AG04450 (cell line): ENCODE measurements at regions of chrX and their contacts with region 1.

Region 1: DNA sequence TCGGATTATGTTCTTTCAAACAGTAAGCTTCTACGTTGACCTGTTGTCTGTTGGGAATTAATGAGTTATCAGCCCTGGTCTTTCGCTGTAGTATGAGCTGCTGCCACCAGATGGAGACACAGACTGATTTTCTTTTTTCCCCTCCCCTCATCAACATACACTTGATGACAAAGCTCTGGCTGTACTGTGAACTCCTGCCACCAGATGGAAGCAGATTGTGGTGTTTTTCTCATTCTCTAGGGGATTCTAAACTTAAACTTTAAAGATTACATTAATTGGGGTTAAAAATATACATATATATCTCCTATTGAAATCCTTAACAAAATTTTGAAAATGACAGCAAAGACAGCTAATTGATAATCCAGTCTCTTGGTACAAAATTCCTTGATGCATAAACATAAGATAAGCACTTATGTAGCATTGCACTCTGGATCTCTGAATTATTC is 44.8 kb downstream of the SMS start:
- DNase-seq: peak; percentile 51
- H3K4me3 ChIP-seq: no peak overlapping the region
- H3K27ac ChIP-seq: no peak overlapping the region
- H3K27me3 ChIP-seq: no peaks in the 10 kb centered on the region
- CTCF ChIP-seq: peak; percentile 82

Region 2: GRCh38 chrX:21839334-21840192 is 145.8 kb before region 1 on chrX and contains the start of gene MBTPS2:
- CTCF ChIA-PET with region 1: interaction called, 11 read pairs
- POLR2A ChIA-PET with region 1: no interaction called
- DNase-seq: peak; percentile 81
- H3K4me3 ChIP-seq: peak within 1 kb of the TSS; percentile 74
- H3K27ac ChIP-seq: peak within 1 kb of the TSS; percentile 61
- H3K27me3 ChIP-seq: no peaks in the 10 kb centered on the region
- CTCF ChIP-seq: peak; percentile 15; the same call in 1 of the 2 replicates
- polyA plus RNA-seq, gene MBTPS2: 24.6 and 31.2 TPM in 2 replicates

Region 3: GRCh38 chrX:21914306-21914953 is 70.9 kb before region 1 on chrX:
- CTCF ChIA-PET with region 1: no interaction called
- POLR2A ChIA-PET with region 1: no interaction called
- DNase-seq: no peak
- H3K4me3 ChIP-seq: no peak overlapping the region
- H3K27ac ChIP-seq: no peak overlapping the region
- H3K27me3 ChIP-seq: no peaks in the 10 kb centered on the region
- CTCF ChIP-seq: no peak

Region 4: GRCh38 chrX:21940356-21940829 is 45.0 kb before region 1 on chrX and contains the start of gene SMS:
- CTCF ChIA-PET with region 1: interaction called, 12 read pairs
- POLR2A ChIA-PET with region 1: no interaction called
- DNase-seq: peak; percentile 26
- H3K4me3 ChIP-seq: peak within 1 kb of the TSS; percentile 66
- H3K27ac ChIP-seq: peak within 1 kb of the TSS; percentile 80
- H3K27me3 ChIP-seq: no peaks in the 10 kb centered on the region
- CTCF ChIP-seq: no peak
- polyA plus RNA-seq, gene SMS: 131 and 175 TPM in 2 replicates

Region 5: GRCh38 chrX:21996872-21997271 is 11.5 kb after region 1 on chrX:
- CTCF ChIA-PET with region 1: interaction called, 12 read pairs
- POLR2A ChIA-PET with region 1: no interaction called
- DNase-seq: peak; percentile 37
- H3K4me3 ChIP-seq: no peak overlapping the region
- H3K27ac ChIP-seq: peak overlapping the region; percentile 68
- H3K27me3 ChIP-seq: no peaks in the 10 kb centered on the region
- CTCF ChIP-seq: no peak

Region 6: GRCh38 chrX:22135994-22136684 is 150.8 kb after region 1 on chrX:
- CTCF ChIA-PET with region 1: interaction called, 35 read pairs
- POLR2A ChIA-PET with region 1: no interaction called
- DNase-seq: no peak
- H3K4me3 ChIP-seq: no peak overlapping the region
- H3K27ac ChIP-seq: peak overlapping the region; percentile 71
- H3K27me3 ChIP-seq: no peaks in the 10 kb centered on the region
- CTCF ChIP-seq: peak; percentile 53

Region 7: GRCh38 chrX:23554304-23554703 is 1568.9 kb after region 1 on chrX:
- CTCF ChIA-PET with region 1: interaction called, 48 read pairs
- POLR2A ChIA-PET with region 1: no interaction called
- DNase-seq: peak; percentile 3
- H3K4me3 ChIP-seq: no peak overlapping the region
- H3K27ac ChIP-seq: no peak overlapping the region
- H3K27me3 ChIP-seq: no peaks in the 10 kb centered on the region
- CTCF ChIP-seq: peak; percentile 54

Region 8: DNA sequence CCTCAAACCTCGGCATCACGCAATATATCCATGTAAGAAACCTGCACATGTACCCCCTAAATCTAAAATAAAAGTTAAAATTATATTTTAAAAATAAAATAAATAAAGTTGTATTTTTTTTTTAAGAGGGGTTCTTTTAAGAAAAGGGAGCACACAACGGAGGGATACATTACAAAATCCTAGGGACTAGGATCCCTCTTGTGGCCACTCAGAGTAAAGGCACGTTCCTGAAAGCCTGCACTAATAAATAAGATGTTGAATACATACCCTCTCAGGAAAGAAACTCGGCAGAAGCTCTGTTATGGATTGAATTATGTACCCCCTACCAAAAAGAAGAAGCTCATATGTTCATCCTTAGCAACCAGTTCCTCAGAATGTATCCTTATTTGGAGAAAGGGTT is 1631.0 kb after region 1 on chrX:
- CTCF ChIA-PET with region 1: interaction called, 19 read pairs
- POLR2A ChIA-PET with region 1: no interaction called
- DNase-seq: no peak
- H3K4me3 ChIP-seq: no peak overlapping the region
- H3K27ac ChIP-seq: no peak overlapping the region
- H3K27me3 ChIP-seq: peaks cover 3% of the 10 kb centered on the region
- CTCF ChIP-seq: peak; percentile 61